Activated naive CD4-positive, alpha-beta T cell treated with anti-CD3 and anti-CD28 coated beads for 36 hours (primary cell): ENCODE measurements at regions of chr1 and their contacts with region 1.

Region 1: DNA sequence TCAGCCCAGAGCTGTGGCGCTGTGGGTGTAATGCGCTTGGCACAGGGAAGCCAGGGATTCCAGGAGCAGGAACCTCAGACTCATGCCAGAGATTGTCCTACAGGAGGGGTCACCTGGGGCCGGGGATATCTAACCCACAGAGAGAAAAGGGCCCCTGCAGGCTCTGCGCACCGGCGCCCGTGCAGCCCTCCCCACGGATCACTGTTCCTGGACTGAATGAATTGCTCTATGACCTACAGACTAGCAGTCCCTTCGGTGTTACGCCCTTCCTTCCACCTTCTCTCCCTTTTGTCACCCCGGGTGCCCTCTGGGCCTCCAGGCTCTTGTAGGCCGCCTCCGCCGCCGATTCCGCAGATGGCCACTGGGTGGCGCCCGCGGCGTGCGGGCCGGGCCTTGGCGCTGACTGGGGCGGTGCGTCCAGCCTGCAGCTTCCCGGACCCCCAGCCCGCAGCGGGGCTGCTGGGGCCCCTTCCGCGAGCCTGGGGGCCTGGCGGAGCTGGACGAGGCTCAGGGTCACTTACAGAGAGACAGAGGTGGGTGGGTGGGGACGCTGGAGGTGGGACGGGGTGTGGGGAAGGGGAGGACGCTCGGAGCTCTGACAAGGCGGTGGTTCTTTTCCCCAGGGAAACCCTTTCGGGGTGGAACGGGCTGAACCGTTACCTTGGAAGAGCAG is 101.3 kb downstream of the IER5 start:
- DNase-seq: peak; percentile 78
- H3K4me3 Mint-ChIP-seq: no peak overlapping the region
- H3K27ac Mint-ChIP-seq: no peak overlapping the region
- H3K4me1 Mint-ChIP-seq: peaks cover 2% of the 10 kb centered on the region
- H3K27me3 Mint-ChIP-seq: peaks cover 3% of the 10 kb centered on the region

Region 2: GRCh38 chr1:181318022-181318857 is 128.4 kb after region 1 on chr1:
- CTCF ChIA-PET with region 1: interaction called, 3 read pairs
- intact Hi-C with region 1: loop called (anchors 5 kb)
- DNase-seq: peak; percentile 11
- H3K4me3 Mint-ChIP-seq: peak overlapping the region; percentile 56
- H3K27ac Mint-ChIP-seq: no peak overlapping the region
- H3K4me1 Mint-ChIP-seq: peaks cover 29% of the 10 kb centered on the region
- H3K27me3 Mint-ChIP-seq: peaks cover 48% of the 10 kb centered on the region

Region 3: GRCh38 chr1:181430015-181430885 is 240.4 kb after region 1 on chr1:
- CTCF ChIA-PET with region 1: interaction called, 49 read pairs
- intact Hi-C with region 1: no loop called
- DNase-seq: no peak
- H3K4me3 Mint-ChIP-seq: no peak overlapping the region
- H3K27ac Mint-ChIP-seq: no peak overlapping the region
- H3K4me1 Mint-ChIP-seq: peaks cover 2% of the 10 kb centered on the region
- H3K27me3 Mint-ChIP-seq: peaks cover 15% of the 10 kb centered on the region